CD8-positive, alpha-beta T cell (primary cell): ENCODE measurements at regions of chr3 and their contacts with region 1.

Region 1: GRCh38 chr3:156803952-156804741 is 22.0 kb upstream of the LEKR1 start:
- DNase-seq: no peak
- ATAC-seq: no peak
- H3K4me3 ChIP-seq: no peak overlapping the region
- H3K4me3 Mint-ChIP-seq: no peak overlapping the region
- H3K27ac ChIP-seq: no peak overlapping the region
- H3K27ac Mint-ChIP-seq: no peak overlapping the region
- H3K4me1 ChIP-seq: no peaks in the 10 kb centered on the region
- H3K4me1 Mint-ChIP-seq: no peaks in the 10 kb centered on the region
- H3K27me3 ChIP-seq: no peaks in the 10 kb centered on the region
- H3K27me3 Mint-ChIP-seq: no peaks in the 10 kb centered on the region
- CTCF ChIP-seq: no peak

Region 2: GRCh38 chr3:157023226-157023625 is 219.1 kb after region 1 on chr3:
- CTCF ChIA-PET with region 1: no interaction called
- POLR2A ChIA-PET with region 1: no interaction called
- intact Hi-C with region 1: loop called in 1 of 2 experiments (anchors 5 kb)
- DNase-seq: no peak
- ATAC-seq: no peak
- H3K4me3 ChIP-seq: no peak overlapping the region
- H3K4me3 Mint-ChIP-seq: no peak overlapping the region
- H3K27ac ChIP-seq: no peak overlapping the region
- H3K27ac Mint-ChIP-seq: no peak overlapping the region
- H3K4me1 ChIP-seq: no peaks in the 10 kb centered on the region
- H3K4me1 Mint-ChIP-seq: peaks cover 7% of the 10 kb centered on the region
- H3K27me3 ChIP-seq: no peaks in the 10 kb centered on the region
- H3K27me3 Mint-ChIP-seq: peaks cover 4% of the 10 kb centered on the region
- CTCF ChIP-seq: no peak